Activated CD4-positive, alpha-beta memory T cell treated with anti-CD3 and anti-CD28 coated beads, Interleukin-2, amount 10 ng/mL, durations not matched to agents 7 days and 5 days (primary cell): ENCODE measurements at regions of chr10 and their contacts with region 1.

Region 1: GRCh38 chr10:14837757-14838581 is at the starts of genes CDNF, HSPA14 and MSANTD7:
- DNase-seq: peak; percentile 99
- H3K4me3 Mint-ChIP-seq: peak within 1 kb of the TSS; percentile 88
- H3K27ac Mint-ChIP-seq: peak within 1 kb of the TSS; percentile 82
- H3K4me1 Mint-ChIP-seq: peaks cover 24% of the 10 kb centered on the region
- H3K27me3 Mint-ChIP-seq: no peaks in the 10 kb centered on the region
- total RNA-seq, gene CDNF: 0.63 to 0.75 TPM
- total RNA-seq, gene HSPA14: 21.9 to 23.1 TPM
- total RNA-seq, gene MSANTD7: 15.5 to 18.7 TPM

Region 2: GRCh38 chr10:14185316-14186045 is 652.5 kb before region 1 on chr10:
- CTCF ChIA-PET with region 1: no interaction called
- POLR2A ChIA-PET with region 1: interaction called, 33 read pairs
- DNase-seq: peak; percentile 70
- H3K4me3 Mint-ChIP-seq: peak overlapping the region; percentile 63
- H3K27ac Mint-ChIP-seq: peak overlapping the region; percentile 92
- H3K4me1 Mint-ChIP-seq: peaks cover 26% of the 10 kb centered on the region
- H3K27me3 Mint-ChIP-seq: peaks cover 47% of the 10 kb centered on the region

Region 3: GRCh38 chr10:14371581-14371980 is 466.4 kb before region 1 on chr10:
- CTCF ChIA-PET with region 1: no interaction called
- POLR2A ChIA-PET with region 1: no interaction called
- DNase-seq: no peak
- H3K4me3 Mint-ChIP-seq: no peak overlapping the region
- H3K27ac Mint-ChIP-seq: no peak overlapping the region
- H3K4me1 Mint-ChIP-seq: no peaks in the 10 kb centered on the region
- H3K27me3 Mint-ChIP-seq: peaks cover 39% of the 10 kb centered on the region

Region 4: GRCh38 chr10:14536241-14537213 is 301.4 kb before region 1 on chr10:
- CTCF ChIA-PET with region 1: interaction called, 24 read pairs
- POLR2A ChIA-PET with region 1: interaction called, 3 read pairs
- DNase-seq: peak; percentile 47
- H3K4me3 Mint-ChIP-seq: no peak overlapping the region
- H3K27ac Mint-ChIP-seq: no peak overlapping the region
- H3K4me1 Mint-ChIP-seq: peaks cover 80% of the 10 kb centered on the region
- H3K27me3 Mint-ChIP-seq: no peaks in the 10 kb centered on the region

Region 5: GRCh38 chr10:14571866-14572507 is 266.0 kb before region 1 on chr10:
- CTCF ChIA-PET with region 1: interaction called, 4 read pairs
- POLR2A ChIA-PET with region 1: interaction called, 11 read pairs
- DNase-seq: peak; percentile 68
- H3K4me3 Mint-ChIP-seq: peak overlapping the region; percentile 77
- H3K27ac Mint-ChIP-seq: peak overlapping the region; percentile 89
- H3K4me1 Mint-ChIP-seq: peaks cover 95% of the 10 kb centered on the region
- H3K27me3 Mint-ChIP-seq: no peaks in the 10 kb centered on the region

Region 6: GRCh38 chr10:14604181-14605142 is 233.5 kb before region 1 on chr10:
- CTCF ChIA-PET with region 1: no interaction called
- POLR2A ChIA-PET with region 1: interaction called, 13 read pairs
- DNase-seq: peak; percentile 77
- H3K4me3 Mint-ChIP-seq: peak overlapping the region; percentile 94
- H3K27ac Mint-ChIP-seq: peak overlapping the region; percentile 89
- H3K4me1 Mint-ChIP-seq: peaks cover 58% of the 10 kb centered on the region
- H3K27me3 Mint-ChIP-seq: no peaks in the 10 kb centered on the region

Region 7: GRCh38 chr10:14878266-14879054 is 40.5 kb after region 1 on chr10 and contains the start of gene SUV39H2:
- CTCF ChIA-PET with region 1: interaction called, 15 read pairs
- POLR2A ChIA-PET with region 1: interaction called, 53 read pairs
- DNase-seq: peak; percentile 96
- H3K4me3 Mint-ChIP-seq: peak within 1 kb of the TSS; percentile 95
- H3K27ac Mint-ChIP-seq: peak within 1 kb of the TSS; percentile 82
- H3K4me1 Mint-ChIP-seq: peaks cover 56% of the 10 kb centered on the region
- H3K27me3 Mint-ChIP-seq: no peaks in the 10 kb centered on the region
- total RNA-seq, gene SUV39H2: 24.5 to 25.2 TPM